B cell (primary cell): ENCODE measurements at regions of chr16 and their contacts with region 1.

Region 1: GRCh38 chr16:30628627-30629540 is 18.7 kb upstream of the ZNF689 start:
- DNase-seq: peak; percentile 85
- ATAC-seq: peak; percentile 93
- H3K4me3 ChIP-seq: peak overlapping the region in 3 of 5 experiments; percentile 8 to 37 (median 28)
- H3K4me3 Mint-ChIP-seq: peak overlapping the region; percentile 68
- H3K27ac ChIP-seq: no peak overlapping the region
- H3K27ac Mint-ChIP-seq: peak overlapping the region; percentile 78
- H3K4me1 ChIP-seq: peaks cover 0 to 15% of the 10 kb centered on the region in 2 donors
- H3K4me1 Mint-ChIP-seq: peaks cover 8% of the 10 kb centered on the region
- H3K27me3 ChIP-seq: no peaks in the 10 kb centered on the region
- H3K27me3 Mint-ChIP-seq: peaks cover 1% of the 10 kb centered on the region
- CTCF ChIP-seq: peak; percentile 95

Region 2: GRCh38 chr16:30041846-30042267 is 587.0 kb before region 1 on chr16:
- CTCF ChIA-PET with region 1: no interaction called
- POLR2A ChIA-PET with region 1: no interaction called
- intact Hi-C with region 1: loop called (anchors 5 kb)
- DNase-seq: no peak
- ATAC-seq: no peak
- H3K4me3 ChIP-seq: no peak overlapping the region
- H3K4me3 Mint-ChIP-seq: no peak overlapping the region
- H3K27ac ChIP-seq: no peak overlapping the region
- H3K27ac Mint-ChIP-seq: no peak overlapping the region
- H3K4me1 ChIP-seq: peaks cover 4 to 5% of the 10 kb centered on the region in 2 donors
- H3K4me1 Mint-ChIP-seq: peaks cover 4% of the 10 kb centered on the region
- H3K27me3 ChIP-seq: peaks cover 0 to 5% (median 0%) of the 10 kb centered on the region in 4 experiments
- H3K27me3 Mint-ChIP-seq: peaks cover 11% of the 10 kb centered on the region
- CTCF ChIP-seq: peak; percentile 39

Region 3: DNA sequence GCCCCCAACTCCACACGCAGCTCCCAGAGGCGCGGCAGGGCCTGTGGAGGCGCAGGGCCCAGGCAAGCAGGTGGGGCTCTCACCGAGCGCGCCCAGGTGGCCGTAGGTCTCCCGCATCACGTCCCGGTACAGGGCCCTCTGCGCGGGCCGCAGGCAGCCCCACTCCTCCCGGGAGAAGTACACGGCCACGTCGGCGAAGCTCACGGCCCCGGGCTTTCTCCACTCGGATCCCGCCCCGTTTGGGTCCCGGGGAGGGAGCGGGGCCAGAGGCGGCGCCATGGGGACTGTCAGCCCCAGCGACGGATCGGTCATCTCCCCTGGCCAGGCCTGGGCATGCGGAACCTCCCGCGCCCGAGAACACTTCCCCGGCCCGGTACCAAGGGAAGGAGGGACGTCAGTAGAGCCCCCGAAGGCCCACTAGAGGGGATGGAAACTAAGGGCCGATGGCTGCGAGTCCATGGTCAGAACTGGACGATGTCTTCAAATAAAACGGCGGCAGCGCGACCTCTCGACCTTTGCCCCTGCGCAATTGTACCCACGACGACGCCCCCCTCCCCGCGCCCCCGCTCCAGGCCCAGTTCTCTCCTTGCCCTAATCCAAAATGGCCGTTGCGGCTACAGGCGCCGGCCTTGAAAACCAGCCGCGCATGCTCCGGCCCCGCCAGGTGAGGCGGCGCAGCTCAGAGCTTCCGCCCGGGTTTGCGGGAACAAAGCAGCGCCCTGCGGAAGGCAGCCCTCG is 94.3 kb before region 1 on chr16 and contains the start of gene ZNF747:
- CTCF ChIA-PET with region 1: interaction called, 17 read pairs
- POLR2A ChIA-PET with region 1: interaction called, 4 read pairs
- intact Hi-C with region 1: loop called (anchors 1 kb)
- DNase-seq: peak; percentile 93
- ATAC-seq: peak; percentile 82
- H3K4me3 ChIP-seq: peak within 1 kb of the TSS; percentile 80 to 93 (median 88)
- H3K4me3 Mint-ChIP-seq: peak within 1 kb of the TSS; percentile 98
- H3K27ac ChIP-seq: peak within 1 kb of the TSS; percentile 89 to 94
- H3K27ac Mint-ChIP-seq: peak within 1 kb of the TSS; percentile 94
- H3K4me1 ChIP-seq: peaks cover 8 to 23% of the 10 kb centered on the region in 2 donors
- H3K4me1 Mint-ChIP-seq: peaks cover 33% of the 10 kb centered on the region
- H3K27me3 ChIP-seq: no peaks in the 10 kb centered on the region
- H3K27me3 Mint-ChIP-seq: no peaks in the 10 kb centered on the region
- CTCF ChIP-seq: no peak
- total RNA-seq, gene ZNF747: 17.3 and 27.1 TPM in 2 replicates

Region 4: DNA sequence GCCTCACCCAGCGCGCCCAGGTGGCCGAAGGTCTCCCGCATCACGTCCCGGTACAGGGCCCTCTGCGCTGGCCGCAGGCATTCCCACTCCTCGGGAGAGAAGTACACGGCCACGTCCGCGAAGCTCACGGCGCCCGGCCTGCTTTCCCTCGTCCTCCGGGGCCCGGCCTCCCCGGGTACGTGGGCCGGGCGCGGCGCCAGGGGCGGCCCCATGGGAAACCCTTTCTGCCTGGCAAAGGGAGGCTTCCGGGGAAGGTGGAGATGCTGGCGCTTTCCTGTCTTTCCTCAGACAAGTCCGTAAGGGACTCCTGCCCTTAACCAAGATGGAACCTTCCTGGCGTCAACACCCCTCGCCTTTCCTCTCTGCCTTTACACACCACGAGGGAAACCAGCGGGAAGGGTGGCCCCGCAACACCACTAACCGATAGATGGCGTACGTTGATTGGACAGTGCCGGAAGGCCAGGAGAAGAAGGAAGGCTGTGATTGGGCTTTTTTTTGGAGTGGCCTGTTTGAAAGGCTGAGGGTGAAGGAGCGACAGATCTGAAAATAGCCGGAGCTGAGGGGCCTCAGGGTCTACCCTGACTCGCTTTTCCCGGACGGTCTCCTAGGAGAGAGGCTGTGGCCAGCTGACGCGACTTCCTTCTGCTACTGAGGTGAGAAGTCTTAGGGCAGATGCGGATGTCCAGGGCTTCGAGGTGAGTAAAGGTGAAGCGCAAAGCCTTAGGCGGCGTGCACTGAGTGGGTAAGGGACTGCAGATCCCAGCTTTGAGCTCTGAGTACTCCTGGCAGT is 43.3 kb before region 1 on chr16 and contains the start of gene ZNF785:
- CTCF ChIA-PET with region 1: interaction called, 6 read pairs
- POLR2A ChIA-PET with region 1: interaction called, 5 read pairs
- intact Hi-C with region 1: loop called (anchors 1 kb)
- DNase-seq: peak; percentile 95
- ATAC-seq: peak; percentile 99
- H3K4me3 ChIP-seq: peak within 1 kb of the TSS; percentile 56 to 89 (median 75)
- H3K4me3 Mint-ChIP-seq: peak within 1 kb of the TSS; percentile 85
- H3K27ac ChIP-seq: peak within 1 kb of the TSS; percentile 29 to 82
- H3K27ac Mint-ChIP-seq: peak within 1 kb of the TSS; percentile 71
- H3K4me1 ChIP-seq: peaks cover 8 to 21% of the 10 kb centered on the region in 2 donors
- H3K4me1 Mint-ChIP-seq: peaks cover 22% of the 10 kb centered on the region
- H3K27me3 ChIP-seq: no peaks in the 10 kb centered on the region
- H3K27me3 Mint-ChIP-seq: no peaks in the 10 kb centered on the region
- CTCF ChIP-seq: no peak
- total RNA-seq, gene ZNF785: 39.7 and 44.6 TPM in 2 replicates

Region 5: GRCh38 chr16:30650369-30651123 is 21.7 kb after region 1 on chr16 and contains the start of gene PRR14:
- CTCF ChIA-PET with region 1: interaction called, 8 read pairs
- POLR2A ChIA-PET with region 1: interaction called, 28 read pairs
- intact Hi-C with region 1: loop called (anchors 1 kb)
- DNase-seq: peak; percentile 99
- ATAC-seq: peak; percentile 76
- H3K4me3 ChIP-seq: peak within 1 kb of the TSS; percentile 62 to 100 (median 93)
- H3K4me3 Mint-ChIP-seq: peak within 1 kb of the TSS; percentile 91
- H3K27ac ChIP-seq: peak within 1 kb of the TSS; percentile 97 to 98
- H3K27ac Mint-ChIP-seq: peak within 1 kb of the TSS; percentile 96
- H3K4me1 ChIP-seq: peaks cover 9 to 21% of the 10 kb centered on the region in 2 donors
- H3K4me1 Mint-ChIP-seq: peaks cover 19% of the 10 kb centered on the region
- H3K27me3 ChIP-seq: no peaks in the 10 kb centered on the region
- H3K27me3 Mint-ChIP-seq: no peaks in the 10 kb centered on the region
- CTCF ChIP-seq: no peak
- total RNA-seq, gene PRR14: 92.7 and 95.8 TPM in 2 replicates